Esophagus muscularis mucosa (tissue), 4 donors: ENCODE measurements at regions of chr14 and their contacts with region 1.

Region 1: DNA sequence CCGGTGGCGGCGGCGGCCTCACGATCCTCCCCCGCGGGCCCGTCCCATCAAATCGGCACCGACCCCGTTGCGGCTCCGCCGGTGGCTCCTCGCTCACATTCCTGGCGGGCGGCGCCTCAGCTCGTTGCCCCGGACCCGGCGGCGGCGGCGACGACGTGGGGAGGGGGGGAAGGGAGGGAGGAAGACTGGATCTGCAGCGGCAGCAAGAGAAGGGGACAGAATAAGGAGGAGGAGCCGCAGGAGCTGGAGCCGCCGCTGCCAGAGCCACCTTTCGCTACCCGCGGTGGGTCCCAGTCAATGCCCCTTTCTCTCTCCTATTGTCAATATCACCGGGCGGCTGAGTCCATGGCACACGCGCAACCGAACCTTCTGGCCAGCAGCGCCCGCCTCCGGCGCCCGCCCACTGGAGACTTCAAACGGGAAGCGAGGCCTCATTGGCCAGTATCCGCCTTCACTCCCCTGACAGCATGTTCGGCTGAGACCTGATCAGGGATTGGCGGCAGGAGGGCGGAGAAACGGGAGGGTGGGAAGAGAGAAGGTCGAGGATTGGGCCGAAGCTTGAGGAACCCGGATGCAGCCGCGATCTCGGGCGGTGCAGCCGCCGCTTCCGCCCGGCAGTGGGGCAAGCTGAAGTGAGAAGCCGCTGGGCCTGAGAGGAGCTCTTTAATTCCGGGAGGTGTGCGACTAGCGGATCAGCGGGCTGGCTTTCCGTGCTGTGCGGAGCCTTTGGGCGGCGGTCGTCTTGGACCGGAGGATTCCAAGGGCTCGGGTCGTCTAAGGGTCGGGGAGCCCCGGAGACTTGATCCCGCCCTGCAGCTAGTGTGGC is at the start of gene PPP2R5E:
- DNase-seq: peak; percentile 99
- H3K4me3 ChIP-seq: peak within 1 kb of the TSS; percentile 80 to 100 (median 85)
- H3K27ac ChIP-seq: peak within 1 kb of the TSS; percentile 87 to 96 (median 94)
- H3K4me1 ChIP-seq: peaks cover 22 to 35% (median 30%) of the 10 kb centered on the region in 4 donors
- H3K27me3 ChIP-seq: no peaks in the 10 kb centered on the region
- CTCF ChIP-seq: no peak
- EP300 ChIP-seq: no peak
- POLR2A ChIP-seq: peak; percentile 64
- total RNA-seq, gene PPP2R5E: 26.3 to 30.7 (median 30.2) TPM

Region 2: DNA sequence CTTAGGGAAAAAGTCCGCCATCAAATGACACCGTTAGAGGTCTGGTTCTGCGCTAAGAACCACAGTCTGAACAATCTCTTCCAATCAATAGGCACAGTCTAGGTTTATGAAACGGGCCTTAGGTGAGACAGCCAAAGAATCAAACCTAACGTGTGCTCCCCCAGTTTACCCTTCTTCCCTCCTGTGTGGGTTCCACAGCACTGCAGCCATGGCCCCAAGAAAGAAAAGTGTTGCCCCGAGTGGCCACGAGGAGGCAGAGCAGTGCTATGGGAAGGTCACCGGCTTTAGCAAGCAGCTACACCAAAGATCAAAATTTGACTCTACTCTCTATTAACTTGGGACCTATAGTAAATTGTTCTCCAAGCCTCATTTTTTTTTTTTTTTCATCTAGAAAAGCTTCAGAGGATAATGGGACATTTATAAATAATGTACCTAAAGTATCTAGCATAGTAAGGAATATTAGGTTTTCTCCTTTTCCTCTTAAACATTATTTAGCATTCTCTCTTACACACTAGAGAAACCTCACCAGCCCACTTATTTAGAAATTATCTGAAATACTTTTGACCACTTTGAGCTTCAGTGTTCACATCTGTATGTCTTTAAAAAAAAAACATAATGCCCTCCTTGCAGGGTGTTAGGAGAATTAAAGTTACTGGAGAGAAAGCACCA is 154.3 kb before region 1 on chr14:
- intact Hi-C with region 1: loop called (anchors 2 kb)
- DNase-seq: no peak
- H3K4me3 ChIP-seq: no peak overlapping the region
- H3K27ac ChIP-seq: no peak overlapping the region
- H3K4me1 ChIP-seq: no peaks in the 10 kb centered on the region
- H3K27me3 ChIP-seq: no peaks in the 10 kb centered on the region
- CTCF ChIP-seq: peak; percentile 80 to 88 (median 86)
- EP300 ChIP-seq: no peak
- POLR2A ChIP-seq: no peak

Region 3: GRCh38 chr14:63437953-63438757 is 105.1 kb before region 1 on chr14:
- intact Hi-C with region 1: loop called (anchors 5 kb)
- DNase-seq: peak; percentile 96
- H3K4me3 ChIP-seq: peak overlapping the region; percentile 29 to 48 (median 34)
- H3K27ac ChIP-seq: peak overlapping the region; percentile 74 to 88 (median 74)
- H3K4me1 ChIP-seq: peaks cover 57 to 72% (median 61%) of the 10 kb centered on the region in 4 donors
- H3K27me3 ChIP-seq: no peaks in the 10 kb centered on the region
- CTCF ChIP-seq: peak in 2 of 3 experiments; percentile 13 to 29
- EP300 ChIP-seq: peak; percentile 2
- POLR2A ChIP-seq: no peak